ENCODE measurements at regions of chr3 and their contacts with region 1.

Region 1: DNA sequence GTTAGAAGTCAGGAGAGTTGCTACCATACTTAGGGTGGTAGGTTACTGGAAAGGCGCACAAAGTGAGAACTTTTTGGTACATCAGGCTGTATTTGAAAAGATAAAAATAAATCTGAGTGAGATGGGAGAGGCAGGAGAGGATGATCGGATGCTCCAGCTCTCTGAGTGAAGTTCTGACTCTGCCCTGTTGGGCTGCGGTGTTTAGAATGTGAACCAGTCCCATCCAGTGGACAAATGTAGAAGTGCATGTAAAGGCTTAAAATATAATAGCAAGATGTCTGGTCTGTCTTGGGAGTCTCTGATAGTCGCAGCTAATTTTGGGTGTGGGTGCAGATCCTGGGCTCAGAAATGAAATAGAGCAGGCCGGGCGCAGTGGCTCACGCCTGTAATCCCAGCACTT is 30.4 kb downstream of the ACKR2 start:
- DNase-seq: peak in 7 of 10 donors; percentile 16 to 57 (median 48)
- H3K4me3 ChIP-seq: peak overlapping the region in 28 of 59 donors; percentile 2 to 55 (median 32)
- H3K27ac ChIP-seq: no peak overlapping the region
- H3K27me3 ChIP-seq: no peaks in the 10 kb centered on the region
- CTCF ChIP-seq: peak; percentile 58 to 86 (median 78)

Region 2: GRCh38 chr3:42780892-42781700 is 58.5 kb before region 1 on chr3:
- intact Hi-C with region 1: loop called (anchors 5 kb)
- DNase-seq: no peak
- H3K4me3 ChIP-seq: no peak overlapping the region
- H3K27ac ChIP-seq: no peak overlapping the region
- H3K27me3 ChIP-seq: no peaks in the 10 kb centered on the region
- CTCF ChIP-seq: peak; percentile 73 to 97 (median 89)

Region 3: DNA sequence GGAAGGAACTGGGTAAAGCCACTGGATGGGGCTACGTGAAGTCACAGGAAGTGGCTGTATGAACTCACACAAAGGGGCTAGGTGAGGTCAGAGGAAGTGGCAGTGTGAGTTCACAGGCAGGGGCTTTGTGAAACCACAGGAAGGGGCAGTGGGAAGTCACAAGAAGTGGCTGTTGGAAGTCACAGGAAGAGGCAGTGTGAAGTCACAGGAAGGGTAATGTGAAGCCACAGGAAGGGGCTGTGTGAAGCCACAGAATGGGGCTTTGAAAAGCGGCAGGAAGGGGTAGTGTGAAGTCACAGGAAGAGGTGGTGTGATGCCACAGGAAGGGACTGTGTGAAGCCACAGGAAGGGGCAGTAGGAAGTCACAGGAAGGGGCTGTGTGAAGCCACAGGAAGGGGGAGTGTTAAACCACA is 174.1 kb after region 1 on chr3:
- intact Hi-C with region 1: no loop called
- DNase-seq: no peak
- H3K4me3 ChIP-seq: no peak overlapping the region
- H3K27ac ChIP-seq: no peak overlapping the region
- H3K27me3 ChIP-seq: no peaks in the 10 kb centered on the region
- CTCF ChIP-seq: no peak